ENCODE measurements at regions of chrX and their contacts with region 1.

Region 1: DNA sequence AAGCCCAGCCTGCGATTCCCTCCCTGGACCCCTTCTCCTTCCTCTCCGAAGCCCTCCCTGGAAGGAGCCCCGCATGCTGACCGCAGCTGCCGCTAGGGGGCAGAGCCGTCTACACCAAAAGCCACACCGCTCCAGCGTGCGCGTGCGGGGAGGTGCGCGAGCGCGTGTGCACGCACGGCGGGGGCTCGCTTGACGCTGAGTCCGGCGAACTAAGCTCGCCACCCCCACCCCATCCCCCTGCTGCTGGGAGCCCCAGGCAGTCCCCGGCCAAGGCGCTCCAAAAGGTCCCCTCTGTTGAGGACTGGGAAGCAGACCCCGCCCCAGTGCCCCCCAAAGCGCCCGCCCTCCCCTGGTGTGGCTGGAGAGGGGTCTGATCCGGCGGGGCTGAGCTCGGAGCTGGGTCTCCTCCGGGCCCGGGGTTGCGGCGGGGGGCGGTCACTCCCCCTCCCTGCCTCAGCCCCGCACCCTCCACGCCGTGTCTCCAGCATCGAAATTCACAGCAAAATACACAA is 11.0 kb upstream of the CCNQ start:
- DNase-seq: peak; percentile 18
- H3K4me3 ChIP-seq: peak overlapping the region; percentile 45
- H3K27ac ChIP-seq: no peak overlapping the region
- H3K27me3 ChIP-seq: peaks cover 16% of the 10 kb centered on the region
- CTCF ChIP-seq: peak; percentile 63

Region 2: GRCh38 chrX:153445856-153446649 is 163.9 kb before region 1 on chrX and contains the start of gene TREX2:
- CTCF ChIA-PET with region 1: no interaction called
- POLR2A ChIA-PET with region 1: no interaction called
- DNase-seq: no peak
- H3K4me3 ChIP-seq: no peak within 1 kb of the TSS
- H3K27ac ChIP-seq: no peak within 1 kb of the TSS
- H3K27me3 ChIP-seq: no peaks in the 10 kb centered on the region
- CTCF ChIP-seq: no peak
- polyA plus RNA-seq, gene TREX2: not detected in 2 replicates

Region 3: DNA sequence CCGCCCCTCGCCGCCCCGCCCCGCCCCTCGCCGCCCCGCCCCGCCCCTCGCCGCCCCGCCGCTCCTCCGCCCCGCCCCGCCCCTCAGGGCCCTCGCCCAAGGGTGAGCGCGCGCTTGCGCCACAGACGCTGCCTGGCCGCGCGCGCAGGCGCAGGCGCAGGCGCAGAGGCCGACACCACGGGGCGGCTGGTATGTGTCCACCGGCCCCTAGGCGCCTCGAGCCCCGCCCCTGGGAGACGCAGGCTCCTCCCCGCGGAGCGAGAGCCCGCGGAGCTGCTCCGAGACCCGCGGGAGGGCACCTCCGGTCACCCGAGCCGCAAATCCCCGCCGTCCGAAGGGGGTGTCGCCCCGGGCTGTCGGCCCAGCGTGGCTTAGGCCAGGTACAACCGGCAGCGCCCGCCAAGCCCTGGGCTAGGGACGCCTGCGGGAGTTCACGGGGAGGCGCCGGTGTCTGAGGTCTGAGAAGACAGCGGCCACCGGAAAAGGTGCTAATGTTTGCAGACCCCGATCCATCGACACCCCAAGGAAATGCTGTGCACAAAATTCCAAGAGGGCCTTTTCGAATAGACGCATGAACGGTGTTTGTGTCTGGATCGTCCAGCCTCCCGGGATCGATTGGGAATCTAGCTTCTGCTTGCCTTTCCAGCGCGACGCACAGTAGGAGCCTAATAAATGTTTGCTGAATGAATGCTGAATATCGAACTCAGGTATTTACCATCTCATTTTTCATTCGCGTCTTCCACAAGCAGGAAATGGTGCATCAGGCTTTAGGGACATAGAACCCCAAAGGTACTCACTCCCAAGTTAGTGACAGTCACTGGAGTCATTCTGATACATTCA is 10.6 kb before region 1 on chrX:
- CTCF ChIA-PET with region 1: interaction called, 20 read pairs
- POLR2A ChIA-PET with region 1: no interaction called
- DNase-seq: peak; percentile 43
- H3K4me3 ChIP-seq: peak overlapping the region; percentile 64
- H3K27ac ChIP-seq: no peak overlapping the region
- H3K27me3 ChIP-seq: no peaks in the 10 kb centered on the region
- CTCF ChIP-seq: no peak

Region 4: GRCh38 chrX:153662266-153662665 is 52.3 kb after region 1 on chrX:
- CTCF ChIA-PET with region 1: interaction called, 55 read pairs
- POLR2A ChIA-PET with region 1: no interaction called
- DNase-seq: no peak
- H3K4me3 ChIP-seq: no peak overlapping the region
- H3K27ac ChIP-seq: no peak overlapping the region
- H3K27me3 ChIP-seq: peaks cover 16% of the 10 kb centered on the region
- CTCF ChIP-seq: peak; percentile 42